ENCODE measurements at regions of chr6 and their contacts with region 1.

Region 1: GRCh38 chr6:37051138-37052026 is 45.9 kb downstream of the FGD2 start:
- DNase-seq: peak; percentile 93
- H3K4me3 ChIP-seq: no peak overlapping the region; a peak in 1 of 4 replicates
- H3K27ac ChIP-seq: no peak overlapping the region
- H3K4me1 ChIP-seq: peaks cover 0 to 14% of the 10 kb centered on the region in 2 experiments; a peak in 1 of 4 replicates
- H3K27me3 ChIP-seq: no peaks in the 10 kb centered on the region
- CTCF ChIP-seq: peak; percentile 85
- EP300 ChIP-seq: no peak
- RAD21 ChIP-seq: peak; percentile 98

Region 2: GRCh38 chr6:35824552-35825192 is 1226.7 kb before region 1 on chr6:
- CTCF ChIA-PET with region 1: no interaction called
- POLR2A ChIA-PET with region 1: no interaction called
- DNase-seq: no peak
- H3K4me3 ChIP-seq: no peak overlapping the region
- H3K27ac ChIP-seq: no peak overlapping the region
- H3K4me1 ChIP-seq: no peaks in the 10 kb centered on the region
- H3K27me3 ChIP-seq: no peaks in the 10 kb centered on the region
- CTCF ChIP-seq: no peak
- EP300 ChIP-seq: no peak
- RAD21 ChIP-seq: no peak

Region 3: GRCh38 chr6:36623547-36624459 is 427.6 kb before region 1 on chr6:
- CTCF ChIA-PET with region 1: no interaction called
- POLR2A ChIA-PET with region 1: no interaction called
- DNase-seq: peak; percentile 83
- H3K4me3 ChIP-seq: no peak overlapping the region; a peak in 1 of 4 replicates
- H3K27ac ChIP-seq: no peak overlapping the region
- H3K4me1 ChIP-seq: peaks cover 0 to 11% of the 10 kb centered on the region in 2 experiments; a peak in 2 of 4 replicates
- H3K27me3 ChIP-seq: no peaks in the 10 kb centered on the region
- CTCF ChIP-seq: peak; percentile 88
- EP300 ChIP-seq: peak in 1 of 2 experiments; percentile 55; a peak in 1 of 4 replicates
- RAD21 ChIP-seq: peak; percentile 94

Region 4: DNA sequence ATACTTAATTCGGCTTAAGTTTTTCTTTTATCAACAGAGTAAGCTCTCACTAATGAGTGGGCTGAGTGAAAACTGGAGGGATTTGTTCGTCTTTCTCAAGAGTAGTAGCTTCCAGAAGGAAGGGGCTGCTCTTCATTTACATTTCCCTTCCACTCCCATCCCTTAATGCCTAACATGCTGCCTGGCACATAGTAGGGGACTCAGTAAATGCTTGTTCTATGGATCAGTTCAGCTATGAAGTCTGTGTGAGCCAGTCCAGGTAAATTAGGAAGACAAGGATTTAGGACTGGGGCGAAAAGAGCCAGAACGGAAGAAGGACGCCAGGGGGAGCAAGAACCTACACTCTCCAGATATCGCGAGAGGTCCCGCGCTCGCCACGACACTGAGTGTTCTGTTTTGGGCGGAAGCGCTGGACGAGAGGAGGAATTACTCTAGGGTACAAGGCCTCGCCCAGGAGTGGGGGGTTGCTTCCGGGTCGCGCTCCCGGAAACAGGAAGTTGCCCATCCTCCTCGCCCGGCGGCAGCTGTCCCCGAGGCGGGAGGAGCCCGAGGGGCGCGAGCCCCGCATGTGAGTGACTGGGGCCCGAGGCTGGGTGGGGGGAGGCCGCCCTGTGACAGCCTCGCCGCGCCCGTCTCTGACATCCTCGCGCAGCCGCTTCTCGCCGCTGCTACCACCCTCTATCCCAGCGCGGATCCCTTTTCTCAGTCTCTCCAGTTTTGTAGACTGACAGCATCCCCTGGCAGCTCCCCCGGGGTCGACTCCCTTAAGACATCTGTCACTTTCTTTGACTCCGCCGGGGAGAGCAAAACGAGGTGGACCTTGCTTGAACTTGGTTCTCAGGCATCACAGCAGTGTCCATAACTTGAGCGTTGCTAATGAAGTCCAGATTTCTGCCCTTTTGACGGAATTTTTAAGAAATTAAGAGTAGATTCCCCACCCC is 165.7 kb before region 1 on chr6 and contains the start of gene C6orf89:
- CTCF ChIA-PET with region 1: interaction called, 13 read pairs
- POLR2A ChIA-PET with region 1: no interaction called
- DNase-seq: peak; percentile 94
- H3K4me3 ChIP-seq: peak within 1 kb of the TSS; percentile 90 to 96
- H3K27ac ChIP-seq: peak within 1 kb of the TSS; percentile 73 to 84
- H3K4me1 ChIP-seq: peaks cover 0 to 5% of the 10 kb centered on the region in 2 experiments; a peak in 1 of 4 replicates
- H3K27me3 ChIP-seq: no peaks in the 10 kb centered on the region
- CTCF ChIP-seq: peak; percentile 79
- EP300 ChIP-seq: peak in 1 of 2 experiments; percentile 36; a peak in 1 of 4 replicates
- RAD21 ChIP-seq: peak; percentile 58
- polyA plus RNA-seq, gene C6orf89: 20.4 and 29.8 TPM in 2 replicates

Region 5: GRCh38 chr6:36897609-36898008 is 153.8 kb before region 1 on chr6:
- CTCF ChIA-PET with region 1: no interaction called
- POLR2A ChIA-PET with region 1: no interaction called
- DNase-seq: peak; percentile 14
- H3K4me3 ChIP-seq: no peak overlapping the region
- H3K27ac ChIP-seq: no peak overlapping the region
- H3K4me1 ChIP-seq: no peaks in the 10 kb centered on the region
- H3K27me3 ChIP-seq: no peaks in the 10 kb centered on the region
- CTCF ChIP-seq: peak; percentile 40
- EP300 ChIP-seq: no peak
- RAD21 ChIP-seq: 0 out of 2 replicates have a peak, but pooled peaks have one; percentile 18

Region 6: GRCh38 chr6:37102279-37103168 is 51.1 kb after region 1 on chr6:
- CTCF ChIA-PET with region 1: interaction called, 29 read pairs
- POLR2A ChIA-PET with region 1: no interaction called
- DNase-seq: peak; percentile 94
- H3K4me3 ChIP-seq: peak overlapping the region; percentile 42 to 56
- H3K27ac ChIP-seq: peak overlapping the region; percentile 86 to 93
- H3K4me1 ChIP-seq: peaks cover 18 to 27% of the 10 kb centered on the region in 2 experiments
- H3K27me3 ChIP-seq: no peaks in the 10 kb centered on the region
- CTCF ChIP-seq: no peak
- EP300 ChIP-seq: peak in 1 of 2 experiments; percentile 48; a peak in 2 of 4 replicates
- RAD21 ChIP-seq: peak; percentile 28; the same call in 1 of the 2 replicates

Region 7: GRCh38 chr6:37131104-37131959 is 80.0 kb after region 1 on chr6:
- CTCF ChIA-PET with region 1: interaction called, 61 read pairs
- POLR2A ChIA-PET with region 1: interaction called, 3 read pairs
- DNase-seq: peak; percentile 85
- H3K4me3 ChIP-seq: no peak overlapping the region
- H3K27ac ChIP-seq: peak overlapping the region in 1 of 2 experiments; percentile 72; a peak in 2 of 4 replicates
- H3K4me1 ChIP-seq: peaks cover 18 to 30% of the 10 kb centered on the region in 2 experiments; a peak in 3 of 4 replicates
- H3K27me3 ChIP-seq: no peaks in the 10 kb centered on the region
- CTCF ChIP-seq: no peak
- EP300 ChIP-seq: no peak; a peak in 1 of 4 replicates
- RAD21 ChIP-seq: peak; percentile 60

Region 8: DNA sequence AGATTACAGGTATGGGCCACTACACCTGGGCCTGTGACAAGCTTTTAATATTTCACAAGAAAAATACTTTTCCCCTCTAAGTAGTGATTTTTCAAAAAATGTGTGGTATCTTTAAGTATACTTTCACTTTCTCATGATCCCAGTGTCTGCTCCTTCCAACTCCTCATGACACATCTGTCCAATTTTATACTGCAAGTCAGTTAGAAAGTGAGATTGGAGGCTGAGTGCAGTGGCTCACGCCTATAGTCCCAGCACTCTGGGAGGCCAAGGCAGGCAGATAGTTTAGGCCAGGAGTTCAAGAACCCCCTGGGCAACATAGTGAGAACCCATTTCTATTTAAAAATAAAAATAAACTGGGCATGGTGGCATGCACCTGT is 138.8 kb after region 1 on chr6:
- CTCF ChIA-PET with region 1: interaction called, 11 read pairs
- POLR2A ChIA-PET with region 1: no interaction called
- DNase-seq: no peak
- H3K4me3 ChIP-seq: no peak overlapping the region
- H3K27ac ChIP-seq: no peak overlapping the region
- H3K4me1 ChIP-seq: peaks cover 0 to 5% of the 10 kb centered on the region in 2 experiments; a peak in 1 of 4 replicates
- H3K27me3 ChIP-seq: no peaks in the 10 kb centered on the region
- CTCF ChIP-seq: no peak
- EP300 ChIP-seq: no peak
- RAD21 ChIP-seq: no peak